ENCODE measurements at regions of chr22 and their contacts with region 1.

Region 1: GRCh38 chr22:36775964-36776669 is at the start of gene IFT27:
- DNase-seq: peak; percentile 72 to 99 (median 98)
- ATAC-seq: peak; percentile 92
- H3K4me3 ChIP-seq: peak within 1 kb of the TSS; percentile 65
- H3K4me3 Mint-ChIP-seq: peak within 1 kb of the TSS; percentile 85 to 97 (median 92)
- H3K27ac ChIP-seq: peak within 1 kb of the TSS; percentile 90
- H3K27ac Mint-ChIP-seq: peak within 1 kb of the TSS; percentile 92 to 99 (median 96)
- H3K4me1 ChIP-seq: peaks cover 13 to 15% of the 10 kb centered on the region in 2 donors
- H3K4me1 Mint-ChIP-seq: peaks cover 18 to 44% (median 31%) of the 10 kb centered on the region in 7 donors
- H3K27me3 ChIP-seq: no peaks in the 10 kb centered on the region
- H3K27me3 Mint-ChIP-seq: no peaks in the 10 kb centered on the region
- total RNA-seq, gene IFT27: 16.6 to 40.9 (median 32.0) TPM

Region 2: GRCh38 chr22:36331306-36331911 is 444.7 kb before region 1 on chr22:
- CTCF ChIA-PET with region 1: no interaction called
- POLR2A ChIA-PET with region 1: no interaction called
- intact Hi-C with region 1: no loop called
- DNase-seq: peak; percentile 42 to 83 (median 73)
- ATAC-seq: peak; percentile 78
- H3K4me3 ChIP-seq: peak overlapping the region; percentile 57
- H3K4me3 Mint-ChIP-seq: peak overlapping the region; percentile 83 to 95 (median 92)
- H3K27ac ChIP-seq: peak overlapping the region; percentile 82
- H3K27ac Mint-ChIP-seq: peak overlapping the region; percentile 96 to 100 (median 99)
- H3K4me1 ChIP-seq: peaks cover 87 to 92% of the 10 kb centered on the region in 2 donors
- H3K4me1 Mint-ChIP-seq: peaks cover 84 to 100% (median 98%) of the 10 kb centered on the region in 7 donors
- H3K27me3 ChIP-seq: no peaks in the 10 kb centered on the region
- H3K27me3 Mint-ChIP-seq: no peaks in the 10 kb centered on the region

Region 3: DNA sequence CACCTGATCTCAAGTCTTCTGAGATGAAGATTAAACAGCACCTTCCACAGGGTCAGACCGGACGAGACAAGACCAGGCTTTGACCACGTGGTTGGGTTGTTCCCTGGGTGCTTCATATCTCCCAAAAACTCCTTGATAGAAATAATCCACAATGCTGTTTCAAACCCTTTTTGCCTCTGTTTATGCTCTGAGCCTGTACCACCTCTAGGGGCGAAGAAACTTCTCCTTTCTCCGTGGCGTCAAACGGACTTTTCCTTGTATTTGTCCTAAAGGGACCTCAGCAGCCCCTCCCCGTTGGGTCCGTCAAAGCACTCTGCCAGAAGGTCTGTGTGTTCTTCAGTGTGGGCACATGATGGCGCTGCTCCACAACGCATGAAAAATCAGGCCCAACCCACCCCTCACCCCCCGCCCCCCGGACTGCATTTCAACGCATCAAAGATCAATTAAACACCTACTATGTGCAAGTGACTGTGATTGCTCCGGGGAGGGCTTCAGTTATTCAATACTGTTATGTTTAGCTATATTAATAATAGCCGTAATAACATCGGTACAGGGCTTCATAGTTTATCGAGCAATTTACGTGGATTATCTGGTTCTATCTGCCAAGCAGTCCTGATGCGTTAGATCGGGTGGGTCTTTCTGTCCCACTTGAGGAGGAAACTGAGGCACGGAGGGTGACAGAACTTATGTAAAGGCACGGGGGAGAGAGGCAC is 229.9 kb before region 1 on chr22:
- CTCF ChIA-PET with region 1: no interaction called
- POLR2A ChIA-PET with region 1: no interaction called
- intact Hi-C with region 1: loop called in 1 of 2 experiments (anchors 5 kb)
- DNase-seq: peak in 3 of 9 donors; percentile 7 to 34 (median 10)
- ATAC-seq: peak; percentile 63
- H3K4me3 ChIP-seq: no peak overlapping the region
- H3K4me3 Mint-ChIP-seq: no peak overlapping the region
- H3K27ac ChIP-seq: no peak overlapping the region
- H3K27ac Mint-ChIP-seq: no peak overlapping the region
- H3K4me1 ChIP-seq: no peaks in the 10 kb centered on the region
- H3K4me1 Mint-ChIP-seq: peaks cover 0 to 37% (median 5%) of the 10 kb centered on the region in 7 donors
- H3K27me3 ChIP-seq: no peaks in the 10 kb centered on the region
- H3K27me3 Mint-ChIP-seq: peaks cover 8 to 24% (median 15%) of the 10 kb centered on the region in 5 donors

Region 4: DNA sequence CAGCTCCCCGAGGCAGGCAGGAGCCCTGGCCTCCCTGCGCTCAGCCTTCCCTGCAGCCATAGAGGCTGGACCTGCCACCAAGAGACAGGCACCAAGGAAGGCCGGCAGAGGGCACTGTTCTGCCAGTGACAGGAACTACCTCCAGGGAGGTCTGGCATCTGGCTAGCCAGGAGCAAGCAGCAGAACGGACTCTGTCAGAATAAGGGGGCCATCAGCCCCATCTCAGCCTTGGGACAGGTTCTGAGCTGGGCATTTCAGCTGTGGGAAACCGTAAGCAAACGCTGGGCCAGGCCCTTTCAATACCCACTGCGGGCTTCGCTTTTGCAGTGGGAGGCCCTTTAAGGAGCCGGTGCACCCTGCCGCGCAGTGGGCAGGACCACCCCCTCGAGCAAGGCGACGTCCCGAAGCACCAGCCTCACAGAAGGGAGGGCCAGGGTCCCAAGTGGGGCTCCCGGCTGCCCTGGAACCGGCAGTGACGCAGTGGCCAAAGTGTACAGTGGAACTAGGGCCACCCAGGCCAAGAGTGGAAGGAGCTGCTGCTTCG is 18.4 kb before region 1 on chr22:
- CTCF ChIA-PET with region 1: interaction called, 7 read pairs
- POLR2A ChIA-PET with region 1: interaction called, 5 read pairs
- intact Hi-C with region 1: loop called (anchors 1 to 2 kb)
- DNase-seq: peak; percentile 32 to 75 (median 60)
- ATAC-seq: peak; percentile 89
- H3K4me3 ChIP-seq: no peak overlapping the region
- H3K4me3 Mint-ChIP-seq: no peak overlapping the region
- H3K27ac ChIP-seq: no peak overlapping the region
- H3K27ac Mint-ChIP-seq: peak overlapping the region in 1 of 9 donors; percentile 38
- H3K4me1 ChIP-seq: peaks cover 0 to 5% of the 10 kb centered on the region in 2 donors
- H3K4me1 Mint-ChIP-seq: peaks cover 0 to 22% (median 10%) of the 10 kb centered on the region in 7 donors
- H3K27me3 ChIP-seq: no peaks in the 10 kb centered on the region
- H3K27me3 Mint-ChIP-seq: peaks cover 1 to 11% (median 6%) of the 10 kb centered on the region in 5 donors

Region 5: GRCh38 chr22:37051391-37052385 is 275.6 kb after region 1 on chr22 and contains the start of gene KCTD17:
- CTCF ChIA-PET with region 1: no interaction called
- POLR2A ChIA-PET with region 1: interaction called, 4 read pairs
- intact Hi-C with region 1: loop called in 1 of 2 experiments (anchors 1 kb)
- DNase-seq: peak; percentile 50 to 87 (median 67)
- ATAC-seq: peak; percentile 99
- H3K4me3 ChIP-seq: peak within 1 kb of the TSS; percentile 74
- H3K4me3 Mint-ChIP-seq: peak within 1 kb of the TSS; percentile 73 to 94 (median 86)
- H3K27ac ChIP-seq: peak within 1 kb of the TSS; percentile 72
- H3K27ac Mint-ChIP-seq: peak within 1 kb of the TSS in 8 of 9 donors; percentile 40 to 89 (median 80)
- H3K4me1 ChIP-seq: peaks cover 0 to 7% of the 10 kb centered on the region in 2 donors
- H3K4me1 Mint-ChIP-seq: peaks cover 5 to 15% (median 14%) of the 10 kb centered on the region in 7 donors
- H3K27me3 ChIP-seq: no peaks in the 10 kb centered on the region
- H3K27me3 Mint-ChIP-seq: no peaks in the 10 kb centered on the region
- total RNA-seq, gene KCTD17: 19.8 to 44.5 (median 24.9) TPM

Measured in naive thymus-derived CD4-positive, alpha-beta T cell (primary cell).